Activated B cell treated with CpG ODN at 0.5 μM for 24 hours (primary cell): ENCODE measurements at regions of chr10 and their contacts with region 1.

Region 1: GRCh38 chr10:60271319-60272040 is 118.2 kb downstream of the ANK3 start:
- DNase-seq: no peak
- ATAC-seq: peak; percentile 81
- H3K4me3 Mint-ChIP-seq: no peak overlapping the region
- H3K27ac Mint-ChIP-seq: peak overlapping the region; percentile 46
- H3K4me1 Mint-ChIP-seq: peaks cover 13% of the 10 kb centered on the region
- H3K27me3 Mint-ChIP-seq: no peaks in the 10 kb centered on the region
- CTCF ChIP-seq: no peak

Region 2: GRCh38 chr10:60203993-60204618 is 67.4 kb before region 1 on chr10:
- CTCF ChIA-PET with region 1: no interaction called
- POLR2A ChIA-PET with region 1: no interaction called
- intact Hi-C with region 1: no loop called
- DNase-seq: no peak
- ATAC-seq: peak; percentile 54
- H3K4me3 Mint-ChIP-seq: no peak overlapping the region
- H3K27ac Mint-ChIP-seq: no peak overlapping the region
- H3K4me1 Mint-ChIP-seq: peaks cover 10% of the 10 kb centered on the region
- H3K27me3 Mint-ChIP-seq: no peaks in the 10 kb centered on the region
- CTCF ChIP-seq: peak; percentile 50

Region 3: DNA sequence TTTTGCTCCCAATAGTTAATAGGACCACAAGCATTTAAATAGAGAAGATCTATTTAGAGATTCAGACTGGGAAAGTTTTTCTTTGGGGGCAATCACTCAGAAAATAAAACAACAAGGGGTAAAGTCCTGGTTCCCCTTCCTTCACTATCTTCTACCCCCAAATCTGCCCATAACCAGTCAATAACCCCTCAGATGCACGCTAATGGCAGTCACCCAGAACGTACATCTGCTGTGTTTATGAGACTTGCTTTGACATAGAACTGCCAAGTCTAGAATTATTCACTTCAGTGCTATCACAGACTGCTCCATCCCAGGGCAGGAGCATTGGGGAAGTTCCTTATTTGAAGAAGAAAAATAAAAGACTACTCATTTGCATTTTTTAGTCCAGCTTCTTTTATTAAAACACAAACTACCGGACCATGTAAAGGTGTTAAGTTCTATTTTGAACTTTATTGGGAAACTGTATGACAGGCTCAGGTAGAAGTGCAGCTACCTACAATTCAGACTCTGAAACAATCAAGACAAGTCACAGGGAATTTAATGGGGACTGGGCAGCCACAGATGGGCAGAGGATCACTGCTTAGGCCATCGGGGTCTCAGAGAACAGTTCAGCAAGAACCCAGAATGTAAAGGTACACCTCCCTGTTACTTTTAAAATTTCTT is 79.8 kb after region 1 on chr10:
- CTCF ChIA-PET with region 1: no interaction called
- POLR2A ChIA-PET with region 1: no interaction called
- intact Hi-C with region 1: loop called (anchors 2 kb)
- DNase-seq: no peak
- ATAC-seq: peak; percentile 92
- H3K4me3 Mint-ChIP-seq: peak overlapping the region; percentile 47
- H3K27ac Mint-ChIP-seq: peak overlapping the region; percentile 87
- H3K4me1 Mint-ChIP-seq: peaks cover 49% of the 10 kb centered on the region
- H3K27me3 Mint-ChIP-seq: no peaks in the 10 kb centered on the region
- CTCF ChIP-seq: no peak